PC-9 (cell line): ENCODE measurements at regions of chr2 and their contacts with region 1.

Region 1: DNA sequence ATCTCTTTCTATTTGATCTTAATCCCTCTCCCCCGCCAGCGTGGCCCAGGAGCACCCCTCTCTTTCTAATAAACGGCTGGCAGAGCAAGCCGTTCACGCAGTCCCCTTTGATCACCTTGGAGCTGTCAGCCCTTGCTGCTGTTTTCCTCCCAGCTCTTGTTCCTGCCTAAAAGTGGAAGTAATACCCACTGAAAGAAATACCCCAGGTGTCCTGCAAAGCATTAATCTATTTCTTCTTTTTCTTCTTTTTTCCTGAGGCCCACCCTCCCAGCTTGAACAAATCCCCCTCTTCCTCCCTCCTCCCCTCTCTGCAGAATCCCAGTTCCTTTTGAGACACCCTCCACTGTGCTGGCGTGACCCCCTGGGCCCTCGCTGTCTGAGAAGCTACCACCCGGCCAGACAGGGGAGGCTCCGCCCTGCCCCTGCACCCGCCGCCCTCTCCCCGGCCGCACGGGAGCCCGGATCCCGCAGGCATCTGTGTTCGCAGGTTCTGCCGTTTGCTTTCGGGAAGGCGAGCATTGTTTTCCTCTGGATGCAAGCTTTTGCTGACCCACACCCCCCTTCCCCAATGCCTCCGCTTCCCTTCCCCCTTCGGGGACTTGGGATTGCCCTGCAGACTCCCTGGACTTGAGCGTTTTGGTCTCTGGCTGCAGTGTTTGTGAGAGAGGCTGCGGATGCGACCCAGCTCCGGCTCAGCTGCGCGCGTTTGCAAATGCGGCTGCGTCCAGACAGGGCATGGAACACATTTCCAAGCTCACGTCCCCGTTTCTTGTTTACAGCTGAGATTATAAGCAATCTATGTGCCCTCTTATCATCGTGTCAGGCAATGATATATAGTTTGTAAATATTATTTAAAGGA is 631.5 kb downstream of the NYAP2 start:
- DNase-seq: peak; percentile 49 to 65
- H3K4me3 ChIP-seq: peak overlapping the region; percentile 63
- H3K27ac ChIP-seq: peak overlapping the region; percentile 52
- H3K4me1 ChIP-seq: peaks cover 14% of the 10 kb centered on the region
- H3K27me3 ChIP-seq: no peaks in the 10 kb centered on the region
- CTCF ChIP-seq: no peak

Region 2: DNA sequence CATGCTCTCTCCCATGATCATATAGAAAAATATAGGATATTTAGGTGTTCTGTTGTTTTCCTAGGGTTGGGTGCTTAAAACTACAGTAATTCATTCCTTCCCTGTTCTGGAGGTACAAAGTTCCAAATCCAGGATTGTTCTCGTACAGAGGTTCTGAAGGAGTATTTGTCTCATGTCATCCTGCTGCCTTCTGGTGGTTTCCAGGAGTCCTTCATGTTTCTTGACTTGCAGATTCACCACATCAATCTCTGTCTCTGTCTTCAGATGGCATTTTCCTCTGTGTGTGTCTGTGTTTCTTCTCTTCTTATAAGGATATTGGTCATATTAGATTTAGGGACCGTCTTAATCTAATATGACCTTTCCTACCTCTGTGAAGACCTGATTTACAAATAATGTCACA is 233.6 kb before region 1 on chr2:
- CTCF ChIA-PET with region 1: no interaction called
- POLR2A ChIA-PET with region 1: no interaction called
- intact Hi-C with region 1: no loop called
- DNase-seq: no peak
- H3K4me3 ChIP-seq: no peak overlapping the region
- H3K27ac ChIP-seq: no peak overlapping the region
- H3K4me1 ChIP-seq: no peaks in the 10 kb centered on the region
- H3K27me3 ChIP-seq: no peaks in the 10 kb centered on the region
- CTCF ChIP-seq: no peak

Region 3: DNA sequence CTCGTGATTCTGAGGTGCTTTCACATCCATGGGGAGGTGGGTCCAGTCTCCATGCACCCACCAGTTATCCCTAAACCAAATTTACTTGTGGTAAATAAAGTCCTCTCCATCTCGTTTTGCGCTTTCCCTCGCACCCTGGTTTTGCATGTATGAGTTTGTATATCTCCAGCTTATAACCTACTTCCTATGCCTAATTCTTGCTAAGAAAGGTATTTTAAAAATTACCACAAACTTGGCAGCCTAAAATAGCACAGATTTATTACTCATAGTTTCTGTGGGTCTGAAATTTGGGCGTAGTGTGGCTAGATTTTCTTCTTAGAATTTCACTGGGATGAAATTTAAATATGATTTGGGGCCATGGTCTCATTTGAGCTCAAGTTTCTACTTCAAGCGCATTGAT is 120.0 kb before region 1 on chr2:
- CTCF ChIA-PET with region 1: no interaction called
- POLR2A ChIA-PET with region 1: no interaction called
- intact Hi-C with region 1: no loop called
- DNase-seq: no peak
- H3K4me3 ChIP-seq: no peak overlapping the region
- H3K27ac ChIP-seq: no peak overlapping the region
- H3K4me1 ChIP-seq: no peaks in the 10 kb centered on the region
- H3K27me3 ChIP-seq: no peaks in the 10 kb centered on the region
- CTCF ChIP-seq: no peak

Region 4: DNA sequence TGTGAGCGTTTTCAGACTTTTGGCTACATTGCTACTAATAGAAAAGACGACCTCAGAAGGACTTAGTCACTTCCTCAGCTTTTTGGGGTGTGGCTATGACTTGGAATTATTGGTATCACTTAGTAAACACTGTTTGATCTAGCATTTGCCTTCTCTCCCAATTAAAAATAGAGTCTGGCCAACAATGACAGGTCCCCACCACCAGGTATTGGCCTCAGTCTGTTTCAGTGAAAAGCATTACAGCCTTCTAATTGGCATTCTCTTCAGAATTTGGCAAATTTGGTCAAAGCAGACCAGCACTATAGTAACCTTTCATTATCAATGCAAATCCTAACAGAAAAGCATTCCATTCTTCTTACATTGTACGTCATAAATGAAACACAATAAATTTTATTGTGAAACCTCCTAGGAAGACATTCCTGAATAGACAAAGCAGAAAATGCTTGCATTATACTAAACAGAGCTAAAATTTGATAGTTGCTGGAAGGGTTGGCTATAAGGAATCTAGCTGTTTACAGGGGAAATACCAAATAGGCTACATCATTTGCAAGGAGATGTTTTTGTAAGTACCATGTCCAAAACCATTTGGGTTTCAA is 154.7 kb after region 1 on chr2:
- CTCF ChIA-PET with region 1: no interaction called
- POLR2A ChIA-PET with region 1: no interaction called
- intact Hi-C with region 1: no loop called
- DNase-seq: peak; percentile 26 to 70
- H3K4me3 ChIP-seq: no peak overlapping the region
- H3K27ac ChIP-seq: peak overlapping the region; percentile 77
- H3K4me1 ChIP-seq: peaks cover 19% of the 10 kb centered on the region
- H3K27me3 ChIP-seq: no peaks in the 10 kb centered on the region
- CTCF ChIP-seq: no peak

Region 5: DNA sequence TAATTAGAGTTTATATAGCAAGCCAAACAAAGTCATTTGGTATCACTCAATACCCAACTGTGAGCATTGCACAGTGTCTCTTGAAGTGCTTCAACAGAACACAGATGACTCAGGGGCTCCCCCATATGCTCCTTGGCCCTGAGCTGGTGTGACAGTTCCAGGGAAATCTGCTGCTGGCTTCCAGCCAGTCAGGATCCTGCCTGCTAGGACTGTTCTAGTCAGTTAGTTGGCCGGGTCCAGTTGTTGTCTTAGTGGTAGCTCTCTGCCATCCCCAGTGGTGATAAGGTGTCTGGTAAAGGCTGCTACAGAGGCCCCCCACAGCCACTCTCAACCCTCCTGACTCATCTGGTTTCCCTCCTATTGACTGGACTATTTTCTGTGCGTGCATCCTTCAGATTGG is 668.3 kb after region 1 on chr2:
- CTCF ChIA-PET with region 1: no interaction called
- POLR2A ChIA-PET with region 1: no interaction called
- intact Hi-C with region 1: loop called (anchors 5 kb)
- DNase-seq: no peak
- H3K4me3 ChIP-seq: no peak overlapping the region
- H3K27ac ChIP-seq: no peak overlapping the region
- H3K4me1 ChIP-seq: peaks cover 14% of the 10 kb centered on the region
- H3K27me3 ChIP-seq: no peaks in the 10 kb centered on the region
- CTCF ChIP-seq: no peak